K562 (cell line): ENCODE measurements at regions of chr20 and their contacts with region 1.

Region 1: DNA sequence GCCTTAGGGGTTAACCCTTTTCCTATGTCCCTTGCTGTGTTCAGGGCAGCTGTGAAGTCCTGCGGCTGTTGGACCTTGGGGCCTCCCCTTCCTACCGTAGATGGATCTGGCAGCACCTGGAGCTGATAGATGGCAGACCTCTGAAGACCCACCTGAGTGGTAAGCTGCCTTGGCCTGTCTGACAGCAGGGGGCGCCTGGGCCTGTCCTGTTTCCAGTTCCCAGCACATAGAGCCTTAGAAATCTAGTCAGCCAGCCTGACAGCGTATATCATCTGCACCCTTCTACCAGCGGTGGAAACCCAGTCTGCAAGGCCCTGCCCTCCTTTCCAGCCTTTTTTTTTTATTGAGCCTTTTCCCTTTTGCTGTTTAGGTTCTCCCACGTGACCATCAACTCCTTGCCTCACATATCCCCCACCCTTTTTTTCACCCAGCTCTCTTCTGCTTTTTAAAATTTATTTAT is 26.6 kb downstream of the CNBD2 start:
- DNase-seq: peak; percentile 67 to 90 (median 73)
- ATAC-seq: peak; percentile 97
- H3K4me3 ChIP-seq: no peak overlapping the region
- H3K27ac ChIP-seq: no peak overlapping the region
- H3K4me1 ChIP-seq: peaks cover 0 to 11% of the 10 kb centered on the region in 2 experiments; a peak in 4 of 5 replicates
- H3K27me3 ChIP-seq: no peaks in the 10 kb centered on the region; a peak in 1 of 5 replicates
- CTCF ChIP-seq: peak; percentile 91 to 96 (median 93)
- EP300 ChIP-seq: 0 out of 2 replicates have a peak, but pooled peaks have one; percentile 21
- POLR2A ChIP-seq: no peak
- RAD21 ChIP-seq: peak; percentile 95 to 99

Region 2: DNA sequence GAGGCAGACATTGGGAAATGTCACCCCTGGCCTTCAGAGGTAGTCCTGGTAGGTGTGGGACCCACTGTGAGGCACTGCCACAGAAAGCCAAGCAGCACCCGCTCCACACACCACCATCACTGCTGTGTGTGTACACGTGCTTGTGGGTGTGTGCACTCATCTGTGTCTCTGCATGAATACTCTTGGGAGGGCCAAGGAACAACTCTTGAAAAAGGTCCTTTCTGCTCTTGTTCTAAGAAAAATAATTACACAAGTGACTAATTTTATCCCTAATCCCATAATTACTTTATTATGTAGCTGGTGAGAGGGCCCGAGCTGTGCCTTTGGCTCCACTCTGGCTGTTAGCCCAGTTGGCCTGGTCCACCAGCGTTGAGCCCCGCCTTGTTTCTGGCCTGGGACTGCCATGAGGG is 137.8 kb after region 1 on chr20:
- CTCF ChIA-PET with region 1: interaction called, 205 read pairs
- POLR2A ChIA-PET with region 1: interaction called, 13 read pairs
- in situ Hi-C with region 1: loop called (anchors 5 kb)
- intact Hi-C with region 1: loop called (anchors 1 kb)
- DNase-seq: no peak
- ATAC-seq: no peak
- H3K4me3 ChIP-seq: no peak overlapping the region
- H3K27ac ChIP-seq: no peak overlapping the region
- H3K4me1 ChIP-seq: no peaks in the 10 kb centered on the region
- H3K27me3 ChIP-seq: no peaks in the 10 kb centered on the region
- CTCF ChIP-seq: no peak
- EP300 ChIP-seq: no peak
- POLR2A ChIP-seq: no peak
- RAD21 ChIP-seq: no peak

Region 3: DNA sequence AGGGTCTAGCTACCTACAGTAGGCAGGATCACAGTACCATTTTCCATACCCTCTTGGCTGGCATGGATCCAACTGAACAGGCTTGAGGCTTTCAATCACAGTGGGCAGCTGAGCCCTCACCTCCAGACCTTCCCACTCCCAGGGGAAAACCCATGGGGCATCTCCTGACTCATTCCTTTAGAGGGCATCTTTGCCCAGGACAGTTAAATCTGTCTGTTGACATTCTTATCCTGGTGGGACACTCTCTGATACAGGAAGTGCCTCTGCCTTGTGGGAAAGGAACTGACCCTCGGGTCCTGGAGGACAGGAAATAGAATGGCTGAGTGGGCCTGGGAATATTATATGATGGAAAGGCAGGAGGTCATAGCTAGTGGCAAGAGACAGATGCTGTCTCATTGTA is 149.3 kb after region 1 on chr20:
- CTCF ChIA-PET with region 1: interaction called, 205 read pairs
- POLR2A ChIA-PET with region 1: interaction called, 13 read pairs
- in situ Hi-C with region 1: loop called (anchors 5 kb)
- intact Hi-C with region 1: no loop called
- DNase-seq: no peak
- ATAC-seq: no peak
- H3K4me3 ChIP-seq: no peak overlapping the region
- H3K27ac ChIP-seq: no peak overlapping the region
- H3K4me1 ChIP-seq: peaks cover 2 to 7% of the 10 kb centered on the region in 2 experiments; a peak in 3 of 5 replicates
- H3K27me3 ChIP-seq: peaks cover 0 to 13% of the 10 kb centered on the region in 2 experiments; a peak in 1 of 5 replicates
- CTCF ChIP-seq: no peak
- EP300 ChIP-seq: no peak
- POLR2A ChIP-seq: no peak
- RAD21 ChIP-seq: no peak

Region 4: GRCh38 chr20:36199345-36200257 is 204.6 kb after region 1 on chr20:
- CTCF ChIA-PET with region 1: interaction called, 24 read pairs
- POLR2A ChIA-PET with region 1: no interaction called
- in situ Hi-C with region 1: no loop called
- intact Hi-C with region 1: loop called (anchors 1 kb)
- DNase-seq: peak; percentile 82 to 83 (median 83)
- ATAC-seq: peak; percentile 93
- H3K4me3 ChIP-seq: no peak overlapping the region
- H3K27ac ChIP-seq: no peak overlapping the region
- H3K4me1 ChIP-seq: no peaks in the 10 kb centered on the region
- H3K27me3 ChIP-seq: peaks cover 13 to 44% of the 10 kb centered on the region in 2 experiments; a peak in 3 of 5 replicates
- CTCF ChIP-seq: peak; percentile 89 to 95 (median 95)
- EP300 ChIP-seq: no peak
- POLR2A ChIP-seq: no peak
- RAD21 ChIP-seq: peak; percentile 79 to 96